AG04449 (cell line): ENCODE measurements at regions of chr4 and their contacts with region 1.

Region 1: GRCh38 chr4:57426779-57427395 is 316.7 kb upstream of the IGFBP7 start:
- DNase-seq: peak; percentile 19
- H3K4me3 ChIP-seq: no peak overlapping the region
- CTCF ChIP-seq: peak; percentile 84

Region 2: DNA sequence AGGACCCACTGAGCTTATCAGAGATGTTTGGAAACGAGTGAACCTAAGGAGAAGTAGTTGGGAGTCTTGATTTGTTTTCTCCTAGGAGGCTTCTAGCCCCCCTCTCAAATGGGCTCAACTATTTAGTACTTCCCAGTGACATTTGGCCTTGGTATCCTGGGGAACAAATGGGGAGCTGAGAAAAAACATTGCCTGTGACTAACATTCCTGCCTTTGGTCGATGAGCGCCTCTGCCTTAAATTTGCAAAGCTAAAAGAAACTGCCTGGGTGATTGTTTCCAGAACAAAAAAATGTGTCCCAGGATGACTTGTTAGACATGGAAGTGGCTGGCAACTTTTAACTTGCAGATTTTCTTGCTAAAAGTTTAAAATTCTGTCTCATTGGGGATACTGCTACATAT is 257.9 kb before region 1 on chr4:
- CTCF ChIA-PET with region 1: interaction called, 131 read pairs
- POLR2A ChIA-PET with region 1: no interaction called
- DNase-seq: no peak
- H3K4me3 ChIP-seq: no peak overlapping the region
- CTCF ChIP-seq: no peak

Region 3: DNA sequence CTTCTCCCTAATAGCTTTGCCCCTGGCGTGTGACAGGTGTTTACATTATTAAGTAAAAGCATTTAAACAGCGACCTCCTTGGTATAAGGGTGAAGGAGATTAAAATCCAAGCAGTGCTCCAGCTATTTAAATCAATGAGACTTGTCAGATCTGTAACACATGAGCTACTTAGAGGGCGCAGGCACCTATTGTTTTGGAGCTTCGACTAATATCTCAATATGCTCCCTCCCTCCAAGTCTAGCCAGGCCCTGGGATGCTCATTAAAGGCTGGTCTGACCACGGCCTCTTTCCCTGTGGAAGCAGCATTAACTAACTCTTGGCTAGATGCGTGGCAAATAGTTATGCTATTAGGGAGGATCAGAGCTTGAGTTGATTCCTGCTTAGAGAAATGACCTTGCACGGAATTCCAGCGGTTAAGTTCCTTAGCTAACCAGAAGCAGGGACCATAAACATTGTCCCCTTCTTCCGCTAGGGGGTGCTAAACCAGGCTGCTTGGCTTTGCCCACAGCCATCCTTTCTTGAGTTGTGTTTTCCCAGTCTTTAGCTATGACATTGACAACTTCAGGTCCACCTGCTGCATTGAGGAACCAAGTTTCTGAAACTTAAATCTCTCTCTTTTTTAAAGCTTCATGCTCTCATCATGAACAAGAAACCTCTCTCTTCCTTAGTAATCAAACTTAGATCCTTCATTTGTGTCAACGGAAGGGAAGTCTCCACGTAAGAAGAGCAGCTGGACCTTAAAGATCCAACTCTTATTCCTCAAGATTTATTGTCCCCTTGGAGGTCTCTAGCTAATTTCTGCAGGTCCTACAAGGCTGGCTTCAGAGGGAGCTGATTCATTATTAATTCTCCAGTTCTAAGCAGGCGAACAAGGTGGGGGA is 236.0 kb before region 1 on chr4:
- CTCF ChIA-PET with region 1: interaction called, 14 read pairs
- POLR2A ChIA-PET with region 1: no interaction called
- DNase-seq: no peak
- H3K4me3 ChIP-seq: no peak overlapping the region
- CTCF ChIP-seq: peak; percentile 51

Region 4: DNA sequence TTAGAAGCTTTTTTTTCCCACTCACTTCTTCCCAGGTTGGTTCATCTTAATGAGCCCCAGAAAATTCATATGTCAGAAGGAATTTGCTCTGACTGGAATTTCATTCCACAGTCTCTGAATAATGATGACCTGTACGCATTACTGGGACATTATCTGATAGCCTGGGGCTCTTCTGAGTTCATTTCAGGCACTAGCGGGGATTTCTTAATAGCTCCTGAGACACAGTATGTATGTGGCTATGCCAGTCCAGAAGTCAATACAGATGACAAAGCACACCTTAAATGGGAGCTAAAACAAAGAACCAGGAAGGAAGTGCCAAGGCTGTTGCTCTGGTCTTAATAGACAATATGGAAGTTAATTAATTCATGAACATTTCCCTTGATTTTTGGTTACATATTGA is 21.5 kb before region 1 on chr4:
- CTCF ChIA-PET with region 1: interaction called, 85 read pairs
- POLR2A ChIA-PET with region 1: interaction called, 3 read pairs
- DNase-seq: peak; percentile 26
- H3K4me3 ChIP-seq: no peak overlapping the region
- CTCF ChIP-seq: no peak

Region 5: DNA sequence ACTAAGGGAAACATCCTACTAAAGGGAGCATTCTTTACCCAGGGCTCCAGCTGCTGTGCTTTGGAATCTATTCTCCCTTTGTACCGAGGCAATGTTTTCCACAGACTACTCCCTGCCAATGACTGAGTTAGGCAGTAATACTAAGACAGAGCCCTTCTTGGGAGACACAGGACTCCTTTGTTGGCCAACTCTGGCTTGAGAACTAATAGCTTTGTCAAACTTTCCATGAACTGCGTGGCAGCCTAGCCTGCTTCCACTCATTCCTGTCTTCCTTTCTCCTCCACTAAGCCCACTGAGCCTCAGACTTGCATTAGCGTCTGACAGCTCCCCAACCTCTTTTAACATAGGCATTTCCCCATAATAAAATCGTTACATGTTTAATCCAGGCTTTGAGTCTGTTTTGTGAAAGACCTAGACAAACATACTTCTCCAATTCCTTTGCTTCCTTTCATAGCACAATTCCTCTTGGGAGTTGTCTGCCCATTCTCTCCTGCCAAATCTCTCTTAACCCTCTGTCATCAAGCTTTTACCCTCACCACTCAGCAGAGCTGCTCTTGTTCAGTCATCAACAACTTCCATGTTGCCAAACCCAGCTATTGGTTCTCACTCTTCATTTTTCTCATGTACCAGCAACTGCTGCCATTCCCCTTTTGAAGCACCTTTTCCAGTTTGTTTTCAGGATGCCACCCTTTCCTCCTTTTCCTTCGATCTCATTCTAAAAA is 16.4 kb before region 1 on chr4:
- CTCF ChIA-PET with region 1: interaction called, 85 read pairs
- POLR2A ChIA-PET with region 1: interaction called, 3 read pairs
- DNase-seq: peak; percentile 23
- H3K4me3 ChIP-seq: no peak overlapping the region
- CTCF ChIP-seq: no peak

Region 6: DNA sequence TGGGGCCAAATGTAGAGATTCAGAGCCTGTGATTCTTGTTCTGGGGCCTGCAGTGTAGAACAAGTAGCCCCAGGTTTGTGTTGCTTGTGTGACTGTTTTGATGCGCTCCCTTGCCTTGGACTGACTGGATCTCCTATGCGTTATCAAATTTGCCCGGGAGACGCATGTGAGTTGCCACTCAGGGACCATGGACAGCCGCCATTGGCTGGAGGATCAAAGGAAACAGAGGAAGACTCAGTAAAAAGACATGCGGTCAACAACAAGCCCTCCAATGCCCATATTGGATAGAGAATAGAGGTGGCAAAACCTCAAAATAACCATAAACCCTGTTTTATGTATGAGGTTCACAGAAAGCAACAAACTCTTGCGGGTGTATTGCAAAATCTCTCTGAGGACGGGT is 10.8 kb after region 1 on chr4:
- CTCF ChIA-PET with region 1: interaction called, 64 read pairs
- POLR2A ChIA-PET with region 1: no interaction called
- DNase-seq: no peak
- H3K4me3 ChIP-seq: no peak overlapping the region
- CTCF ChIP-seq: no peak

Region 7: DNA sequence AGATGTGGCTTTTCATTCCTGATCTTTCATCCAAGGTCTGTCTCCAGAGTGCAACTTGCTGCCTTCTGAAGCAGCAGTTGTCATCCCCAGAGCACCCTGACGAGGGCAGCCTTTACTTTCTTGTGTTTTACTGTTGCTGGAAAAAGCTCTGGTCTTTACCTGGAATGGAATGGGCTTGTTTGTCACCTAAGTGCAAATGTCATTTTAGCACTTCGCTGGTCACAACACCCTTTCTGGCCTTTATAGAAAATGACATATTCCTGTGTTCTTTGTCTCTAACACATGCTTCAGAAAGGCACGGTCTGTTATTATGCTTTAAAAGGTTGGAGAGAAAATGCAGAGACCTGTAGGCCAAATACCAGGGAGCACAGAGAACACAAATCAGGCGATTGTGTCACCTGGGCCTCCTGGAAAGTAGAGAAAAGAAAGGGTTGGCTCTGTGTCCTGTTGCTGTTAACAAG is 16.0 kb after region 1 on chr4:
- CTCF ChIA-PET with region 1: interaction called, 64 read pairs
- POLR2A ChIA-PET with region 1: no interaction called
- DNase-seq: no peak
- H3K4me3 ChIP-seq: no peak overlapping the region
- CTCF ChIP-seq: peak; percentile 72